PC-9 (cell line): ENCODE measurements at regions of chr11 and their contacts with region 1.

Region 1: DNA sequence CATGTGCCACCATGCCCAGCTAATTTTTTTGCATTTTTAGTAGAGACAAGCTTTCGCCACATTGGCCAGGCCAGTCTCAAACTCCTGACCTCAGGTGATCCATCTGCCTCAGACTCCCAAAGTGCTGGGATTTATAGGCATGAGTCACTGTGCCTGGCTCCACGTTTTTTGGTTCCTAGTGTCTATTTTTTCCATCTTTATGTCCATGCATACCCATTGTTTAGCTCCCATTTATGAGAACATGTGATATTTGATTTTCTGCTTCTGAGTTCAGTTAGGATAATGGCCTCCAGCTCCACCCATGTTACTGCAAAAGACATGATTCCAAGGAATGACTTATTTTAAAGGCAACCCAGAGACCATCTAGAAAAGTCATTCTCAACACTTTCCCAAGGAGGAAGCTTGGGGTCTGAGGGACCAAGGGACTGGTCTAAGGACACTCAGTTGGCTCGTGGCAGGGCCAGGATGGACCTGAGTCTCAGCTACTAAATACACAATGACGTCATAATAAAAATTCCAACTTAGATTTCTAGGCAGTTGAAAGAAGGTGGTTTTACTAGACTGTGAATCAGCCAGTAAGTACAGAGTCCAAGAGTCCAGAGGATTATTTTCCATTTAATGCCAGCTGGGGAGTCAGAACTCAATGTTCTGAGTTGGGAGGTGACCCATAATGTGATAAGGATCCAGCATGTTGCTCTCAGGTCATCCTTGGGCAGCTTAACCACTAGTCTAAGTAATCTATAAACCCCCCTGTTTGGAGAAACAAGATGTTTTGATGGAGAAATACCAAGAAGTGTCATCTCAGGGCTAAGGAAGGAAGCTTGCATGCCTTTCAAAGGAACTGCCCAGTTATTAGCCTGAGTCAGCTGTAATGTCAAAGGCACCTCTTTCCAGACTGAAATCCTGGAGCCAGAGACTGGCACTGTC is 39.4 kb downstream of the ABTB2 start:
- DNase-seq: peak in 1 of 2 experiments; percentile 39
- H3K4me3 ChIP-seq: no peak overlapping the region
- H3K27ac ChIP-seq: peak overlapping the region; percentile 13
- H3K4me1 ChIP-seq: peaks cover 19% of the 10 kb centered on the region
- H3K27me3 ChIP-seq: no peaks in the 10 kb centered on the region
- CTCF ChIP-seq: no peak

Region 2: GRCh38 chr11:34266090-34266912 is 52.1 kb before region 1 on chr11:
- CTCF ChIA-PET with region 1: no interaction called
- POLR2A ChIA-PET with region 1: no interaction called
- intact Hi-C with region 1: no loop called
- DNase-seq: peak; percentile 35 to 64
- H3K4me3 ChIP-seq: no peak overlapping the region
- H3K27ac ChIP-seq: peak overlapping the region; percentile 48
- H3K4me1 ChIP-seq: peaks cover 70% of the 10 kb centered on the region
- H3K27me3 ChIP-seq: no peaks in the 10 kb centered on the region
- CTCF ChIP-seq: no peak

Region 3: DNA sequence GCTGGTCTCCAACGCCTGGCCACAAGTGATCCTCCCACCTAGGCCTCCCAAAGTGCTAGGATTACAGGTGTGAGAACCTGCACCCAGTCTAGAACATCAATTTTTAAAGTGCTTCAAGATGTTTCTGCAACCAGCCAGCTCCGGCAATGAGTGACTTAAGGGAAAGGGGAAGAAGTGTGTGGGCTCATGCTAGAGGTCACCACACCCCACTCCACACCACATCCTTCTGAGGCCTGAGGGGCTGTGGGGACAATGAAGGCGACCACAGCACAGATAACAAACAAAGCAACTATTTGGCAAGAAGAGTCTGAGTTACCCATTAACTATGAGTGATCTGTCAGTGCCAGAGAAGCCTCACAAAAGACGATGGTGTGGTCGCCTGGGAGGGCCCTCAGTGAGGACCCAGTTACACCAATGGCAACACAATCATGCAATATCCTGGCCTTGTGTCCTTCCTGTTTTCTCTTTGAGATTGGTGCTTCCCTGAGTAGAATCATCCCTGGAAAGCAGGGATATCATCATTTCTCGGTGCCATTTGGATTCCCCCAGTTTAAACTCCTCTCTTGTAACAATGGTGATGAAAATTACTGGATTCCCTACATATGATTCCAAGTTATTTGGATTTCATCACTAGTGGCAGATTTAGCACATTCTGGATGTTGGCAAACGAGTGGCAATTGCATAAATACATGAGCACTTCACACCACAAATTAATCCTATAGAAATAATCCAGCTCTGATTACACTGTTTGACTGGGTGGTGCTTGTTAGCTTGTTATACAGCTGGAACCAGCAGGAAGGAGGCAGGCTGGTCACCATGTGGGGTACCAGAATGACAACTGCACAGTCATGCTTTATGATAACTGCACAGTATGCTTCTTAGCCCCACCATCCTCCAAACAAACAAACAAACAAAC is 21.0 kb after region 1 on chr11:
- CTCF ChIA-PET with region 1: no interaction called
- POLR2A ChIA-PET with region 1: interaction called, 10 read pairs
- intact Hi-C with region 1: no loop called
- DNase-seq: peak in 1 of 2 experiments; percentile 64
- H3K4me3 ChIP-seq: no peak overlapping the region
- H3K27ac ChIP-seq: peak overlapping the region; percentile 26
- H3K4me1 ChIP-seq: peaks cover 73% of the 10 kb centered on the region
- H3K27me3 ChIP-seq: no peaks in the 10 kb centered on the region
- CTCF ChIP-seq: no peak